Calu3 (cell line): ENCODE measurements at regions of chr19 and their contacts with region 1.

Region 1: GRCh38 chr19:48110350-48110966 is at the start of gene PLA2G4C:
- DNase-seq: peak; percentile 92
- H3K4me3 Mint-ChIP-seq: peak within 1 kb of the TSS; percentile 38
- H3K27ac Mint-ChIP-seq: peak within 1 kb of the TSS; percentile 53
- H3K4me1 Mint-ChIP-seq: peaks cover 12% of the 10 kb centered on the region
- H3K27me3 Mint-ChIP-seq: peaks cover 17% of the 10 kb centered on the region
- CTCF ChIP-seq: no peak
- total RNA-seq, gene PLA2G4C: 4.2 and 7.7 TPM in 2 replicates

Region 2: DNA sequence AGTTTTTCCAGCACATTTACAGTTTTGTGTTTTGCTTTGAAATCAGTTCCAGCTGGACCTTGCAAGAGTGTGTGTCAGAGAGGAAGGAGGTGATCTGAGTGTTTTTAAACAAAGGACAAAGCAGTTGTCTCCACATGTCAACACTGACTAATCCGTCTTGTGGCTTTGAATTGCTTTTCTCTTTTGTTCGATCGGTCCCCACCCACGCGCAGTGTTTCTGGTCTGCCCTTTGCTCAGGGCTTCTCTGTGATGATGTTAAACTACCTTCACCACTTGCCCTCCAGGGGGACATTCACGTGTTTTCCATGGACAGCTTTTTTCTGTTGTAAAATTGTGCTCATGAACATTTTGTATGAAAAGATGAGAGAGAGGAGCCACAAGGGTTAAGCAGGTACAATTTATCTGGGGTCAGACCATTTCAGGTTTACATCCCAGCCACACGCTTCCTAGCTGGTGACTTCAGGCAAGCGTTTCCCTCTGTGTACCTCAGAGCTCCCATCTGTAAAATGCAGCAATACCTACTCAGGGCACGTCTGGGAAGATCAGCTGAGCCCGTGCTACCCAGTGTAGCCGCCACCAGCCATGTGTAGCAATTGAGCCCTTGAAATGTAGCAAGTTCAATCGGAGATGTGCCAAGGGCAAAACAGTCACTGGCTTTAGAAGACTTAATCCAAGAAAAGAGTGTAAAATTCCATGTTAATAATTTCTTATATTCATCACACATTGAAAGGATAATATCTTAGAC is 13.6 kb after region 1 on chr19:
- CTCF ChIA-PET with region 1: interaction called, 10 read pairs
- intact Hi-C with region 1: no loop called
- DNase-seq: peak; percentile 71
- H3K4me3 Mint-ChIP-seq: no peak overlapping the region
- H3K27ac Mint-ChIP-seq: peak overlapping the region; percentile 55
- H3K4me1 Mint-ChIP-seq: peaks cover 12% of the 10 kb centered on the region
- H3K27me3 Mint-ChIP-seq: no peaks in the 10 kb centered on the region
- CTCF ChIP-seq: peak; percentile 39

Region 3: DNA sequence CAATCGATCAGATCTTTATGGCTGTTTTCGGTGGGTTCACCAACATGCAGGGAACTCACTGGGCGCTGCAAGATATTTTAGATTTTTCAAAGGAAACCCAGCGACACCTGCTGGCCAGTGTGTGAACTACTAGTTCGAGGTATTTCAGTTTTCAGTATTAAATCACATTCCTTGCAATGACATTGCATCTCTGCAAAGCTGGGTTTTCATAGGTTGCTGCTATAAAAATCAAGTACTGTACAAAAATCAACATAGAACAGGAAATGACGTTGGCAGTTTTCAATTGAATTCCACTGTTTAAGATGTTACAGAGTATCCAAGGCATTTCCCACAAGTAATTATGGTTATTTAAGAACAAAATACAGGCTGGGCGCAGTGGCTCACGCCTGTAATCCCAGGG is 42.1 kb after region 1 on chr19:
- CTCF ChIA-PET with region 1: interaction called, 5 read pairs
- intact Hi-C with region 1: loop called (anchors 1 kb)
- DNase-seq: peak; percentile 67
- H3K4me3 Mint-ChIP-seq: no peak overlapping the region
- H3K27ac Mint-ChIP-seq: no peak overlapping the region
- H3K4me1 Mint-ChIP-seq: no peaks in the 10 kb centered on the region
- H3K27me3 Mint-ChIP-seq: no peaks in the 10 kb centered on the region
- CTCF ChIP-seq: peak; percentile 94

Region 4: DNA sequence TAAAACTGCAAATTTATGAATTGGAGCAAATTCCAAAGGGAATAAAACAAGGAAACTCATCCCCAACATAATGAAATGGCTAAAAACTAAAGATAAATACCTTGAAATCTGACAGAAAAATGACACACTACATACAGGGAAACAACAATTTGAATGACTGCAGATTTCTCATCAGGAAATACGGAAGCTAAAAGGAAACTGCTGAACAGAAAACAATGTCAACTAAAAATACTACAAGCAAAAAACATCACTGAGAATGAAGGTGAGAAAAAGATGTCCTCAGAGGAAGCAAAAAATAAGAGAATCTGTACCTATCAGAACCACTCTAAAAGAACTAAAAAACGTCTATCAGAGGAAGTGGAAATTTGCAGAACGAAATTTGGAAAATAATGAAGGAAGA is 99.5 kb after region 1 on chr19:
- CTCF ChIA-PET with region 1: no interaction called
- intact Hi-C with region 1: no loop called
- DNase-seq: no peak
- H3K4me3 Mint-ChIP-seq: no peak overlapping the region
- H3K27ac Mint-ChIP-seq: no peak overlapping the region
- H3K4me1 Mint-ChIP-seq: no peaks in the 10 kb centered on the region
- H3K27me3 Mint-ChIP-seq: no peaks in the 10 kb centered on the region
- CTCF ChIP-seq: no peak

Region 5: DNA sequence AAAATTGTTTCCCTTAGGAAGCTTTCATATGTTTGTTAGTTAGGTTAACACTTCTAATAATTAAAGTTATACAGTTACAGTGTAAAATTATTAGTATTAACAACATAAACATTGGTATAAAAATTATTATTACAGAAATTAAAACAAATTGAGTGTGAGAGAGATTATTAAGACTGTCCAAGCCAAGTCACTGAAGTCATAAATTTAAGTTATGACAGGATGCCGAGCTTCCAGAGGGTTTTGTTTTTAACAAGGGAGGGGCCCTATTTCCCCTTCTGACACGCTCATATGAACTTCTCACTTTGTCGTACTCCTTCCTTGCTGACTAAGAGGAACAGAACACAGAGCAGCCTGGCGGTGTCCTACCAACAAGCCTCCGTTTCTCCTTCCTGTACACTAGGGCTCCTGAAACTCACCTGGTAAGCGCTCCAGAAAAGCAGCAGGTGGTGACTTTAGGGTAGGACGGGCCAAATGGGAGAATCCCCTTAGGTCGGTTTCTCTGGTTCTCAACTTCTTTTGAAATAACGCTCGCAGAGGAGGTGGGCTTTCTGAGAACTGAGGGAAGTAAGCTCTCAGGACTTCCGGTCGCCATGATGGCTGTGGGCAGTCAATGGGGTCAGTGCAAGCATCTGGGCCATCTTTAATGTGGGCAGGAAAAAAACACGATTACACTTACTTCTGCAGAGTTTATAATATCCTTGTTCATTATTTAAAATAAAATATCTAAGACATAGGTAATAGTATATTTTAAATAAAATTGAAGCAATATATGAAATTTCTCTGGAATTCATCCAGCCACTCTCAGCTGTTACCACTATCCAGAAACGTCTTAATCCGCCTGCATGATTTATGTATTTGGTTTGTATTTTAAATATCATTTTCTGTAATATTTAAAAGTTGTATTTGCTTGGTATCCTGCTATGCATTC is 145.2 kb after region 1 on chr19 and contains the start of gene CARD8:
- CTCF ChIA-PET with region 1: interaction called, 6 read pairs
- intact Hi-C with region 1: loop called (anchors 5 kb)
- DNase-seq: peak; percentile 77
- H3K4me3 Mint-ChIP-seq: peak within 1 kb of the TSS; percentile 89
- H3K27ac Mint-ChIP-seq: peak within 1 kb of the TSS; percentile 91
- H3K4me1 Mint-ChIP-seq: peaks cover 23% of the 10 kb centered on the region
- H3K27me3 Mint-ChIP-seq: no peaks in the 10 kb centered on the region
- CTCF ChIP-seq: no peak
- total RNA-seq, gene CARD8: 32.3 and 34.0 TPM in 2 replicates